AG04450 (cell line): ENCODE measurements at regions of chr4 and their contacts with region 1.

Region 1: GRCh38 chr4:17324386-17324830 is 187.5 kb downstream of the QDPR start:
- DNase-seq: peak; percentile 62
- H3K4me3 ChIP-seq: no peak overlapping the region
- H3K27ac ChIP-seq: peak overlapping the region; percentile 34
- H3K27me3 ChIP-seq: no peaks in the 10 kb centered on the region
- CTCF ChIP-seq: peak; percentile 80

Region 2: DNA sequence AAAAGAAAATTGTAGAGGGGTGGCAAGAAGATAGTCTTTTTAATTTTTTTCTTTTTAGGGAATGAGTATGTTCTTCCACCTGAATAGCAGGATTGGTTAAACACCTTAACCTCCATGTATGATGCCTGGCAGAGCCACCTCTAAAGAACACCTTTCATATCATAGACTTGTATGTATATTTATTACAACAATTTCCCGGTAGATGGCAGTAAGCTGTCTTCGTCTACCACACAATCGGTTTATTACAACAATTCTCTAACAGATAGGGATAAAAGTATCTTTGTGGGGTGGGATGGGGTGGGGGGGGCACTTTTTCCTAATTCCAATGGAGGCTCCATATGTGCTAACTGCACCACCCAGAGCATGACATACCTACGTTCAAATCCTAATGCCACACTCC is 681.5 kb before region 1 on chr4:
- CTCF ChIA-PET with region 1: interaction called, 16 read pairs
- POLR2A ChIA-PET with region 1: interaction called, 3 read pairs
- DNase-seq: no peak
- H3K4me3 ChIP-seq: no peak overlapping the region
- H3K27ac ChIP-seq: no peak overlapping the region
- H3K27me3 ChIP-seq: no peaks in the 10 kb centered on the region
- CTCF ChIP-seq: peak; percentile 45

Region 3: DNA sequence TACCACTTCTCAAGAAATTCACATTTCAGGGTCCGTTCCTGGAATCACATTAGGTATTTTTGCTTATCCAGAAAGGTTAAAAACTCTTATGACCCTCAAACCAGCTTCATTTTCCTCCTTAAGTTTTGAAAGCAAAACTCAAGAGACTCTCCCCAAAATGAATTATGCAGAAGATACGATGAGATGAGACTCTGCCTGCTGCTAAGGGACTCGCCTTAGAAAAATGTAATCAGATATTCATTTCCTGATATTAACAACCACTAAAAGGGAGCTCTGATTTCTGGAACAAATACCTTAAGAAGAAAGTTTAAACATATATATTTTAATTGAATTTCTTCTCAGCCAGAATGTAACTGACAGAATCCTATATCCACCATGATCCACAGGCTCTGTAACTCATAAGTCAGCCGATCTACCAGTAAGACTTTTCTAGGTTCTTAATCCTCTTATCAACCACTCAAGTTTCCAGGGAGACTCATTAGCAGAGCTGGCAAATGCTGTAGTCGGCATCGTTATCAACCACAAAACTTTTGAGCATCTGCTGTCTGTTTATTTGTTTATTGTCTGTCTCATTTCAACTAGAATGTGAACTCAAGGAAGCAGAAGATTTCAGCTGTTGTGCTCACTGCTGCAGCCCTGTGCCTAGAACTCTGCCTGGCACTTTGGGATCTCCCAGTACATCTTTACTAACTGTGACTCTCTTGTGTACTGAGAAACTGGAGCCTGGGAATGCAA is 538.4 kb before region 1 on chr4:
- CTCF ChIA-PET with region 1: interaction called, 11 read pairs
- POLR2A ChIA-PET with region 1: no interaction called
- DNase-seq: no peak
- H3K4me3 ChIP-seq: no peak overlapping the region
- H3K27ac ChIP-seq: no peak overlapping the region
- H3K27me3 ChIP-seq: no peaks in the 10 kb centered on the region
- CTCF ChIP-seq: no peak

Region 4: GRCh38 chr4:16843831-16844508 is 480.4 kb before region 1 on chr4:
- CTCF ChIA-PET with region 1: interaction called, 15 read pairs
- POLR2A ChIA-PET with region 1: no interaction called
- DNase-seq: peak; percentile 91
- H3K4me3 ChIP-seq: no peak overlapping the region
- H3K27ac ChIP-seq: no peak overlapping the region
- H3K27me3 ChIP-seq: no peaks in the 10 kb centered on the region
- CTCF ChIP-seq: no peak

Region 5: DNA sequence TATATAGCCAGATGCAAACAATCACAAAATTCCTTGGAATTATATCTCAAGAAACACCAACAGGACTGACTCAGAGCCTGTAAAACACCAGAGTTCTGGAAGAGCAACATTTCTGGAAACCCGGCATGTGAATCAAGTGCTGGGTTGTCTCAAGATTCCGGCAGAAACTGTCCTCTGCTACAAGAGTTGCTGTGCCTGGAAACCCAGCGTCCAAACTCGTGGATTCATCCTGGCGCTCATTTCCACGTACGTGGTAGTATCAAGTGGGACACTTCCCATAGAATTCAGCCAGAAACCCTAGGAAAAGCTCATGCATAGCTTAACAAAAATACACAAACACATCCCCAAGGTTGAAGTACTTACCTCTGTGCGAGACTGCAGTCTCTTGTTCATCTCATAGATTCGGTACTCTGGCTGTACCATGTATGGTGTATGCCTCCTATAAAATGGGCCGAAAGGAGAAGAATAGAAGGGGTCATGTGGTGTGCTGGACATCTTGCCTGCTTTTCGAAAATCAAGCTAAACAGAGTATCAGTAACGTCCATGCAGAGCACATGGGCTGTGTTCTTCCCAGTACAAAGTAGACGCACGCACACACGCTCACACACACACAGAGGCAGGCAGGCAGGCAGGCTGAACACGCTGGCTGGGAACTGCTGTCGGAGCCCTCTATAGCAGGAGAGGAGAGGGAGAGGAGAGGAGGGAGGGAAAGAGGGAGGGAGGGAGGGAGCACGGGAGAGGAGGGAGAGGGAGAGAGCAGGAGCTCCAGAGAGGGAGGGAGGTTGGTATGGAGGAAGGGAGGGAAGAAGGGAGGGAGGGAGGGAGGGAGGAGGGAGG is 426.2 kb before region 1 on chr4 and contains the start of gene LDB2:
- CTCF ChIA-PET with region 1: interaction called, 17 read pairs
- POLR2A ChIA-PET with region 1: no interaction called
- DNase-seq: peak; percentile 75
- H3K4me3 ChIP-seq: peak within 1 kb of the TSS; percentile 78
- H3K27ac ChIP-seq: peak within 1 kb of the TSS; percentile 75
- H3K27me3 ChIP-seq: no peaks in the 10 kb centered on the region
- CTCF ChIP-seq: no peak
- polyA plus RNA-seq, gene LDB2: 180 and 202 TPM in 2 replicates

Region 6: GRCh38 chr4:17055788-17056187 is 268.6 kb before region 1 on chr4:
- CTCF ChIA-PET with region 1: no interaction called
- POLR2A ChIA-PET with region 1: no interaction called
- DNase-seq: peak; percentile 86
- H3K4me3 ChIP-seq: no peak overlapping the region
- H3K27ac ChIP-seq: no peak overlapping the region
- H3K27me3 ChIP-seq: no peaks in the 10 kb centered on the region
- CTCF ChIP-seq: no peak

Region 7: DNA sequence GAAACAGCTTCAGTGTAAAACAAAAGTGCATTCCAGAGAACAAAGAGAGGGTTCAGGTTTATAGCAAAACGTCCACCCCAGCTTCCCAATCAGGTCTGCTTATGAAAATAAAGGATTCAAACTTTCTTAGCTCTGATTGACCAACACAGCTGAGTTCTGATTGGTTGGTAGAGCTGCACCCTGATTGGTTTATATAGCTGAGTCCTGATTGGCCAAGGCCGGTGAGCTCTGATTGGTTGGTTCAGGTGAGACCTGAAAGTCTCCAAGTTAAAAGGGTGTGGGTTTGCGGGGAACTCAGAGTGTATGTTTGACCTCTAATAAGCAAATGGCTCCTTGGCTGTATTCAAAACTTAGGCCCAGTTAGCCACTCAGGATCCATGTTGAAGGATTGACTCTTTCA is 211.5 kb after region 1 on chr4:
- CTCF ChIA-PET with region 1: no interaction called
- POLR2A ChIA-PET with region 1: no interaction called
- DNase-seq: no peak
- H3K4me3 ChIP-seq: no peak overlapping the region
- H3K27ac ChIP-seq: no peak overlapping the region
- H3K27me3 ChIP-seq: peaks cover 10% of the 10 kb centered on the region
- CTCF ChIP-seq: no peak

Region 8: GRCh38 chr4:18033111-18034085 is 709.0 kb after region 1 on chr4:
- CTCF ChIA-PET with region 1: interaction called, 10 read pairs
- POLR2A ChIA-PET with region 1: no interaction called
- DNase-seq: no peak
- H3K4me3 ChIP-seq: no peak overlapping the region
- H3K27ac ChIP-seq: no peak overlapping the region
- H3K27me3 ChIP-seq: peaks cover 5% of the 10 kb centered on the region
- CTCF ChIP-seq: no peak